ENCODE measurements at regions of chr11 and their contacts with region 1.

Region 1: GRCh38 chr11:19553683-19554333 is 158.8 kb upstream of the NAV2 start:
- DNase-seq: peak; percentile 76
- H3K4me3 ChIP-seq: no peak overlapping the region
- H3K27ac ChIP-seq: no peak overlapping the region
- H3K4me1 ChIP-seq: peaks cover 6% of the 10 kb centered on the region
- H3K27me3 ChIP-seq: peaks cover 3% of the 10 kb centered on the region
- CTCF ChIP-seq: peak; percentile 90

Region 2: DNA sequence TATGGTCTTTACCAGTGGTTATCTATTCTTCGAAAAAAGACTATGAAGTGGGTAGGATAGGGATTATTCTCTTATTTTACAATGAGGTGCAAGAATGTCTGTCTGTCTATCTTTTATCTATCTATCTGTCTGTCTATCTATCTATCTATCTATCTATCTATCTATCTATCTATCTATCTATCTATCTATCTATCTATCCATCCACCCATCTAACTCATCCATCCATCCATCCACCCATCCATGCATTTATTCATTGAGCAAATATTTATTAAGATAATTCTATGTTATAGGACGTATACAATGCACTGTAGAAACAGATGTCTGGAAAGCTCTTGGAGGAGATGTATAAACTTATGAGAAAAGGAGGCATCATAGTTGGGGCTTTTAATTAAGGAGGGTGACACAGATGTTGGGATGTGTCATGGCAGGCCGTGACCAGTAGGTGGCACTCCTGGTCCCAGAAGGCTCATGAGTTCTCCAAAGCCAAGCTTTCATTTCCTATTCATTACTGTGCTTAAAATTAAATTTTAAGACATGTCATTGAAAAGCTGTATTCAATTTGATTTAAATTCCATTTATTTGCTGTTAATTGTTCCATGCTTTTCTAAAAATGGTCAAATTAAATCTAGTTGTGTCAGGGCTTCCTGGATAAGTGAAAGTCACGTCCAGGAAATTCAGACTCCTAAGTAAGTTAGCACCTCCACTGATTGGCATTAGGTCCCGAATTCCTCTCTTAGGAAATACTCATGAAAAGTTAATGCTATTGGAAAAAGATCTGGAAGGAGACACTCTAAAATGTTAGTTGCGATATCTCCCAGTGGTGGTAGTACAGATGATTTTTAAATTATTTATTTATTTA is 294.1 kb before region 1 on chr11:
- intact Hi-C with region 1: loop called (anchors 5 kb)
- DNase-seq: peak; percentile 68
- H3K4me3 ChIP-seq: peak overlapping the region; percentile 36
- H3K27ac ChIP-seq: no peak overlapping the region
- H3K4me1 ChIP-seq: no peaks in the 10 kb centered on the region
- H3K27me3 ChIP-seq: no peaks in the 10 kb centered on the region
- CTCF ChIP-seq: peak; percentile 95

Region 3: GRCh38 chr11:19311308-19312030 is 242.3 kb before region 1 on chr11:
- intact Hi-C with region 1: loop called (anchors 5 kb)
- DNase-seq: peak; percentile 52
- H3K4me3 ChIP-seq: no peak overlapping the region
- H3K27ac ChIP-seq: no peak overlapping the region
- H3K4me1 ChIP-seq: peaks cover 4% of the 10 kb centered on the region
- H3K27me3 ChIP-seq: no peaks in the 10 kb centered on the region
- CTCF ChIP-seq: peak; percentile 88

Region 4: GRCh38 chr11:19903620-19904069 is 349.8 kb after region 1 on chr11:
- intact Hi-C with region 1: loop called (anchors 5 kb)
- DNase-seq: peak; percentile 54
- H3K4me3 ChIP-seq: no peak overlapping the region
- H3K27ac ChIP-seq: no peak overlapping the region
- H3K4me1 ChIP-seq: peaks cover 19% of the 10 kb centered on the region
- H3K27me3 ChIP-seq: no peaks in the 10 kb centered on the region
- CTCF ChIP-seq: peak; percentile 83

Measured in left ventricle myocardium inferior (tissue), 1 donor.